ENCODE measurements at regions of chr5 and their contacts with region 1.

Region 1: GRCh38 chr5:140157032-140157803 is 17.8 kb upstream of the CYSTM1 start:
- DNase-seq: peak; percentile 80
- H3K4me3 ChIP-seq: peak overlapping the region; percentile 16
- CTCF ChIP-seq: peak; percentile 87

Region 2: DNA sequence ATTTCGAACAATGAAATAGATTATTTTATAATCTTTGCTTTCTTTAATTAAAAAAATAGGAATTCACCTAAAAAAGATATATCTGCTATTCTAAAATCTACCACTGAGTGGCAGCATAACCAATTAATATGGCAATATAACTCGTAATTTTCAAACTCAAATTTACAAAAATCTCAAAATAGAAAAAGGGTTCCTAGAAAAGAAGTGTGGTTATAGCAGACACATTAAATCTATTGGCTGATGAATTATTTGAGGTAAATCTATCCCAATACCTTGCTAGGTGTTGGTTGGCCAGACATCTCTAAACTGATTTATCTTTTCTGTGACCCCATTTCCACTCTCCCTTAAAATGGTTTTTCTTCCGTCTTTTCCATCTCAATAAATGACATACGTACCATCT is 83.9 kb before region 1 on chr5:
- in situ Hi-C with region 1: loop called (anchors 25 kb)
- DNase-seq: peak; percentile 20
- H3K4me3 ChIP-seq: no peak overlapping the region
- CTCF ChIP-seq: peak; percentile 35

Measured in astrocyte of the spinal cord (primary cell).